Activated naive CD4-positive, alpha-beta T cell treated with anti-CD3 and anti-CD28 coated beads for 36 hours (primary cell): ENCODE measurements at regions of chr14 and their contacts with region 1.

Region 1: DNA sequence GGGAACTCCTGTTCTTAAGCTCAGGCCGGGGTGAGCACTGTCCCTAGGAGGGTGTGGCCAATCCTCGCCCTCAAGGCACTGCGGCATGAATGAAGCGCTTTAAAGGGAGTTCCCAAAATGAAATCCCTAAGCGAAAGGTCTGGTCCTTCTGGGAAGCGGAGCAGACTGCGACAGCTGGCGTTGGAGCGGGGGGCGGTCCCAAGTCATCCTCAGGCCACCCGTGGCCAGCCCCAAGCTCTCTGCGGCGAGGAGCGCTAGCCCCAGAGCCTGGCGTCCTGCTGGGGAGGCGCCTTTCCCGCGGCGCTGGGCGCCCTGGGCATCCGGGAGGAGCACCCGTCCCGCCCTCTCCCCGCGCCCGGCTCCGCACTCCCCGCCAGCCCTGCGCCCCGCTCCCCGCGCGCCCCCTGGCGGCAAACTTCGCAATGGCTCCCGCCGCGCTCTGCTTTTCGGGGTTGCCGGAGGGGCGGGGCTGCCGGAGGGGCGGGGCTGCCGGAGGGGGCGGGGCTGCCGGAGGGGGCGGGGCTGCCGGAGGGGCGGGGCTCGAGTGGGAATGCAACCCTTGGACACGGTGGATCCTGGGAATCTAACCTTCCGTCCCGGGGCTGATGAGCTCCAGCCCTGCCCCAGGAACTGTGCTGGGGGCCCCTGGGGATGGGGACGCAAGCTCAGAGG is 25.4 kb downstream of the ZBTB42 start:
- DNase-seq: peak; percentile 94
- H3K4me3 Mint-ChIP-seq: peak overlapping the region; percentile 70
- H3K27ac Mint-ChIP-seq: no peak overlapping the region
- H3K4me1 Mint-ChIP-seq: peaks cover 16% of the 10 kb centered on the region
- H3K27me3 Mint-ChIP-seq: peaks cover 6% of the 10 kb centered on the region

Region 2: GRCh38 chr14:104723648-104724406 is 102.5 kb before region 1 on chr14 and contains the start of gene ADSS1:
- CTCF ChIA-PET with region 1: interaction called, 4 read pairs
- intact Hi-C with region 1: loop called (anchors 1 kb)
- DNase-seq: peak; percentile 53
- H3K4me3 Mint-ChIP-seq: peak within 1 kb of the TSS; percentile 71
- H3K27ac Mint-ChIP-seq: no peak within 1 kb of the TSS
- H3K4me1 Mint-ChIP-seq: no peaks in the 10 kb centered on the region
- H3K27me3 Mint-ChIP-seq: no peaks in the 10 kb centered on the region
- total RNA-seq, gene ADSS1: 5.1 to 5.5 TPM

Region 3: DNA sequence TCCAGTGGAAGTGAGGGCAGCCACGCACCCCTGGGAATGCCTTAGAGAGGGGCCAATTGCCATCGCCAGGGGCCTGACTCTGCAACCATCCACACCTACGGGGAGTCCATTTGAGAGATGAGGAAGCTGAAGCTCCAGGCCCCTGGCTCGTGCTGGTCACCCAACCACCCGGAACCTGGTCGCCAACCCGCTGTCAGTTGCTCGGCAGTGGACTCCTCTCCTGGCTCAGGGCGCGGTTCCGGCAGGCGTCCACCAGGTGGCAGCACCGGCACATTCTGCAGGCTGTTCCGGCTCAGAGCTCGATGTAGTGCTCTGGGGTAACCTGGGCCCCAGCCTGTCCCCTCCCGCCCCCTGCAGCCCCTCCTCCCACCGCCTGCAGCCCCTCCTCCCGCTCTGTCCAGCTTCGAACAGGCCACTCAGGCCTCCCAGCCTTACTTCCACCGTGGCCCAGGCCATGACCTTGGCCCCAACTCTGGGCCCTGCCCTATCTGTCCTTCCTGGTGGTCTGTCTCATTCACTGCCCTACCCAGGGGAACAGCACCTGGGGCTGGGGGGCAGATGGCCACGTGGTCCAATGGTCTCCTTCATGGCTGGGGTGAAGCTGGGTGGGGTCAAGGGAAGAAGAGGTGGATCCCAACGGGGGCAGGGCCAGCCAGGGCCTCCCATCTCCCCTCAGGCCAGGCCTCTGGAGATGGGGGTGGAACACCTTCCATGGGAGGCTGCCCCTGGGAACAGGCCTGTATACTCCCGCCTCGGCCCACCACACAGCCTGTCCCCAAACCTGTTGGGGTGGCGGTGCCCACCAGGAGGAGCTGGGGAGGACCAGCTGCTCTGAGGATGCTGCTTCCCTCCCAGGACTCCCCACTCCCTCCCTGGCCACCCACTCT is 57.6 kb before region 1 on chr14:
- CTCF ChIA-PET with region 1: interaction called, 34 read pairs
- intact Hi-C with region 1: loop called (anchors 1 kb)
- DNase-seq: peak; percentile 95
- H3K4me3 Mint-ChIP-seq: no peak overlapping the region
- H3K27ac Mint-ChIP-seq: peak overlapping the region; percentile 41
- H3K4me1 Mint-ChIP-seq: peaks cover 7% of the 10 kb centered on the region
- H3K27me3 Mint-ChIP-seq: no peaks in the 10 kb centered on the region

Region 4: GRCh38 chr14:104800015-104800770 is 26.1 kb before region 1 on chr14:
- CTCF ChIA-PET with region 1: interaction called, 4 read pairs
- intact Hi-C with region 1: loop called (anchors 1 kb)
- DNase-seq: peak; percentile 77
- H3K4me3 Mint-ChIP-seq: peak overlapping the region; percentile 3
- H3K27ac Mint-ChIP-seq: no peak overlapping the region
- H3K4me1 Mint-ChIP-seq: peaks cover 24% of the 10 kb centered on the region
- H3K27me3 Mint-ChIP-seq: no peaks in the 10 kb centered on the region

Region 5: DNA sequence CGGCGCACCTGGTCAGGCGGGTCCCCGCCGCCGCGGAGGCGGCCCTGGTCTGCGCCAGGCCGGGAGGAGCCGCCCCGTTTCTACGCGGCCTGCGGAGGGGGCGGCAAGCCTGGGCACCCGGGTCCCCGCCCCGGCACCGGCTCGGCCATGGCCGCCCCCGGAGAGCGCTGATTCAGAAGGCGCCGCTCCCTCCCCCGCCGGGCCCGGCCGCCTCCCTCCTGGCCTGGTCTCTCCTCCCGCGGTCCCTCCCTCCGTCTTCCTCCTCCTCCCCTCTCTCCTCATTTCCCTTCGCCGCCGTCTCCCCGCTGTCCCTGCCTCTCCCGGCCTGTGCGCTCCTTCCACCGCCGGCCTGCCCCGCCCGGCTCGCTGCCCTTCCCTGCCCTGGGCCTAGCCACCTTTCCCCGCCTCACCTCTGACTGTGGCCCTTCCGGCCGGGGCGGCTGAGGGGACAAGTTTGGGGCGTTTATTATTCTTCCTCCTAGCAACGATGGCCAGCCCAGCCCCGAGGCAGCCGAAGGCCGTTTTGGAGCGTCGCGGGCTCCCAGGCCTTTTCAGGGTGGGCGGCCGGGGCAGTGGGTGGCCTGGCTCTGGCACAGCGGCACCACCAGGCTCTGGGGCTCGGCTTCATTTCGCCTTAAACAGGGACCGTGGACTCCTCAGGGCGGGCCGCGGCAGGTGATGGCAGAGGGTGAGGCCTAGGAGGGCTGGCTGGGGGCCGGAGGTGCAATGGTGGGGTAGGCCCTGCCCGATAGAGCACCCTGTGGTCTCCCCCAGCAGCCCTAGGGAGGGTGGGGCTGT is 39.5 kb after region 1 on chr14:
- CTCF ChIA-PET with region 1: interaction called, 3 read pairs
- intact Hi-C with region 1: loop called (anchors 1 kb)
- DNase-seq: peak; percentile 38
- H3K4me3 Mint-ChIP-seq: peak overlapping the region; percentile 65
- H3K27ac Mint-ChIP-seq: no peak overlapping the region
- H3K4me1 Mint-ChIP-seq: peaks cover 2% of the 10 kb centered on the region
- H3K27me3 Mint-ChIP-seq: peaks cover 25% of the 10 kb centered on the region

Region 6: DNA sequence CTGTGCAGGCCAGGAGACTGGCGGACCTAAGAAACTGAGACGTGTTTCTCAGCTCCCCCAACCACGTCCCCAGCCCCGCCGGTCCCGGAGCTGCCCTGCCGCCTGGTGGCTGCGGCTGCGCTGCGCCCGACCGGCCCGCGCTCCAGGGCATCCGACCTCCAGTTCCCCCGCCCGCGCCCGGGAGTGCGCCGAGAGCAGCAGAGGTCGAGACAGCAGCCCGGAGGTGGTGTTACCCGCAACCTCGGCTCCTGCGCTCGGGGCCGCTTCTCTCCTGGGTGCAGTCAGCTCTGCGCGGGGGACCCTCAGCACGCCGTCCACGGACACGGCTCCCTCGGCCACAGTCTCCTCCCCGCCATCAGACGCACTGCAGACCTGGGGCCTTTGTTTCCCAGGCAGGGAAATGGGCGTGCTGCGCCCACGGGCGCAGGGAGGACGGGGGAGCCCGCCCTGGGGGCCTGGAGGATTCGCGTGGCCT is 260.5 kb after region 1 on chr14:
- CTCF ChIA-PET with region 1: no interaction called
- intact Hi-C with region 1: no loop called
- DNase-seq: peak; percentile 93
- H3K4me3 Mint-ChIP-seq: peak overlapping the region; percentile 76
- H3K27ac Mint-ChIP-seq: peak overlapping the region; percentile 63
- H3K4me1 Mint-ChIP-seq: peaks cover 8% of the 10 kb centered on the region
- H3K27me3 Mint-ChIP-seq: no peaks in the 10 kb centered on the region

Region 7: DNA sequence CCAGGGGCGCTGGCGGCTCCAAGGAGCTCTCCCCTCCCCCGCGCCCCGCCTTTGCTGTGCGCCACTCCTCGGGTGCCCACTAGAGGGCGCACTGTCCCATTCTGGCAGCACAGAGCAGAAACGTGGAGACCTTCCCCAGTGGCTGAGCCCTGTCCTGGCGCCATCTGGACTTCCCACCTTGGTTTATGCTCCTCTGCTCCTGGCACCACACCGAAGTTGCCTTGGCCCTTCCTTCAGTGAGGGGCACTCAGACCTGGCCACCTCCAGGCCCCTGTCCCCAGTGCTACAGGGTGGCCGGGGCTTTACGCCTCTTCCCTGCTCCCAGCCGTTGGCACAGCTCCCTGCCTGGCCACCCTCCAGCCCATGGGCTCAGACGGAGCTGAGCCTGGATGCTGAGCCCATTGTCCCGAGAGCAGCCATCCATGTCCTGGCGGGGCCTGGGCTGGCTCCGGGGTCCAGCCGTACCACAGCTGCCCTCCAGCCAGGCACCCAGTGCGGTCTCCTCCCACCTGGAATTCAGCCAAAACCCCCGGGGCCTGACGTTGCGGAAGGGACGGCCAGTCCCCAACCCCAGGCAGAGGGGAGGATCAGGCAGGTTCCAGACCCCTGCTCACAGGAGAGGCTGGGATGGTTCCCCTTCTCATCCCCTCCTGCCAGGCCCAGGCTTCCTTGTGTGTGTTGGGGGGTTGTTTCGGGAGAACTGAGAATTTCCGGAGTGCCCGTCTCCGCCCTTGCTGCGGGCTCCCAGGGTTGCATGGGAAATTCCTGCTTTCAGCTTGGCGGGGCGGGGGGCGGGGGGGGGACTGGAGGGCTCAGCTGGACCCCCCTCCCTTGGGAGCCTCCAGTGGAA is 654.9 kb after region 1 on chr14:
- CTCF ChIA-PET with region 1: no interaction called
- intact Hi-C with region 1: loop called (anchors 10 kb)
- DNase-seq: peak; percentile 93
- H3K4me3 Mint-ChIP-seq: peak overlapping the region; percentile 71
- H3K27ac Mint-ChIP-seq: peak overlapping the region; percentile 86
- H3K4me1 Mint-ChIP-seq: peaks cover 60% of the 10 kb centered on the region
- H3K27me3 Mint-ChIP-seq: peaks cover 20% of the 10 kb centered on the region